CD4-positive, alpha-beta T cell (primary cell): ENCODE measurements at regions of chr3 and their contacts with region 1.

Region 1: GRCh38 chr3:46378426-46378942 is 7.7 kb downstream of the CCR5 start:
- DNase-seq: peak; percentile 37 to 77 (median 54)
- ATAC-seq: peak; percentile 54
- H3K4me3 ChIP-seq: no peak overlapping the region
- H3K4me3 Mint-ChIP-seq: no peak overlapping the region
- H3K27ac ChIP-seq: no peak overlapping the region
- H3K27ac Mint-ChIP-seq: no peak overlapping the region
- H3K4me1 ChIP-seq: peaks cover 43% of the 10 kb centered on the region
- H3K4me1 Mint-ChIP-seq: peaks cover 36% of the 10 kb centered on the region
- H3K27me3 ChIP-seq: no peaks in the 10 kb centered on the region
- H3K27me3 Mint-ChIP-seq: no peaks in the 10 kb centered on the region
- CTCF ChIP-seq: peak; percentile 65

Region 2: DNA sequence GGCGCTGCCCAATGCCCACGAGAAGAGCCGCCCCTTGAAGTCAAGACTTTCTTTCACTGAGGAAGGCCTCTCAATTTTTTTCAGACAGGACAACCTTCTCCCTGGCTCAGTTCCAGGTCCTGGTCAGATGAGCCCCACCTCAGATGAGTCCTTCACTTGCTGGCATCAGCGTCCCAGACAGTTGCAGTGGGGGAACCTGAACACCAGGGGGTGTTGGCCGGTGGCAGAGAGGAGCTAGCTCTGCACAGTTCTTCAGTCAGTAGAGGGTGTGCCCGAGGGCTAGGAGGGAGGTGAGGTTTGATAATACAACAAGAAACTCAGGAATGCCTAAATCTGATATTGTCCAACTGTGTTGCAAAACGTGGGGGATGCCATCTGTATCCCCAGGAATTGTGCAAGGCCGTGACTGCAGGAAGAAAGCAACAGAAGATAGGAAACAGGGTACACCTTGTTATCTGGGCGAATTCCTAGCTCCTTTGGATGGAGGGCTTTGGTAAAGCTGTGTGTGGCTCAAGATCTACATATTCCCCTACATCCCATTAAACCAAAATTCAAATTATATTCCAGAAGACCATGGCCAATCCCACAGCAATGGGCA is 101.9 kb before region 1 on chr3:
- CTCF ChIA-PET with region 1: interaction called, 17 read pairs
- POLR2A ChIA-PET with region 1: no interaction called
- intact Hi-C with region 1: loop called (anchors 1 to 2 kb)
- DNase-seq: peak; percentile 53 to 87 (median 70)
- ATAC-seq: peak; percentile 82
- H3K4me3 ChIP-seq: no peak overlapping the region
- H3K4me3 Mint-ChIP-seq: no peak overlapping the region
- H3K27ac ChIP-seq: no peak overlapping the region
- H3K27ac Mint-ChIP-seq: no peak overlapping the region
- H3K4me1 ChIP-seq: peaks cover 40% of the 10 kb centered on the region
- H3K4me1 Mint-ChIP-seq: peaks cover 29% of the 10 kb centered on the region
- H3K27me3 ChIP-seq: no peaks in the 10 kb centered on the region
- H3K27me3 Mint-ChIP-seq: no peaks in the 10 kb centered on the region
- CTCF ChIP-seq: peak; percentile 72